GM10248 (cell line): ENCODE measurements at regions of chr6 and their contacts with region 1.

Region 1: GRCh38 chr6:138115877-138116660 is 8.8 kb upstream of the PERP start:
- DNase-seq: peak; percentile 61
- CTCF ChIP-seq: peak; percentile 51

Region 2: DNA sequence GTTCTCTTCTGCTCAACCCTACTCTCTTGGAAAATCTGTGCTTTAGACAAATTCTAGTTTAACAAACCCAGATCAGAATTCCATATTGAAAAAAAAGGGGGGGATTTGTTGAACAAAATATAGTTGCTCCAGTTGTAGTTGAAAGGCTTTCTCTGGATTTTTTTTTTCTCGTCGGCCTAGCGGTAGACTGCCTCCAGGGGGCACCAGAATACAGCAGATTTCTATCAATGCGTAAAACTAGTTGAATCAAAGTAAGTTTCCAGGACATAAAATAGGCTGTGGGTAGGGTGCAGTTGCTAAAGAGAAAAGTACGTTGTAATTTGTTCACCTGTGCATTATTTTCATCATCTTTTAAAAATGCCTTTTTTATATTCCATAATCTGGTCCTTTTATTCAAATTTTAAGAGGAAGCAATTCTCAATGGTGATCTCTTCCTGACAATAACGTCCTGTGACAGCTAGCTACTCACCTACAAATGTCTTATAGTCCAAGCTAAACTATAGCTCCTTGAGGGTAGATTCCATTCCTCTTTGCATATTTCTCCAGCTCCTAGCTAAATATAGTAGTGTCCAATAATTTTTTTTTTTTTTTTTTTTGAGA is 114.2 kb before region 1 on chr6:
- CTCF ChIA-PET with region 1: interaction called, 12 read pairs
- POLR2A ChIA-PET with region 1: no interaction called
- DNase-seq: peak; percentile 40
- CTCF ChIP-seq: peak; percentile 95

Region 3: GRCh38 chr6:138278326-138278725 is 162.3 kb after region 1 on chr6:
- CTCF ChIA-PET with region 1: interaction called, 10 read pairs
- POLR2A ChIA-PET with region 1: no interaction called
- DNase-seq: no peak
- CTCF ChIP-seq: no peak

Region 4: GRCh38 chr6:138428944-138429598 is 313.0 kb after region 1 on chr6:
- CTCF ChIA-PET with region 1: interaction called, 18 read pairs
- POLR2A ChIA-PET with region 1: no interaction called
- DNase-seq: peak; percentile 56
- CTCF ChIP-seq: peak; percentile 37

Region 5: GRCh38 chr6:138517635-138518034 is 401.6 kb after region 1 on chr6:
- CTCF ChIA-PET with region 1: interaction called, 48 read pairs
- POLR2A ChIA-PET with region 1: no interaction called
- DNase-seq: peak; percentile 68
- CTCF ChIP-seq: peak; percentile 60

Region 6: DNA sequence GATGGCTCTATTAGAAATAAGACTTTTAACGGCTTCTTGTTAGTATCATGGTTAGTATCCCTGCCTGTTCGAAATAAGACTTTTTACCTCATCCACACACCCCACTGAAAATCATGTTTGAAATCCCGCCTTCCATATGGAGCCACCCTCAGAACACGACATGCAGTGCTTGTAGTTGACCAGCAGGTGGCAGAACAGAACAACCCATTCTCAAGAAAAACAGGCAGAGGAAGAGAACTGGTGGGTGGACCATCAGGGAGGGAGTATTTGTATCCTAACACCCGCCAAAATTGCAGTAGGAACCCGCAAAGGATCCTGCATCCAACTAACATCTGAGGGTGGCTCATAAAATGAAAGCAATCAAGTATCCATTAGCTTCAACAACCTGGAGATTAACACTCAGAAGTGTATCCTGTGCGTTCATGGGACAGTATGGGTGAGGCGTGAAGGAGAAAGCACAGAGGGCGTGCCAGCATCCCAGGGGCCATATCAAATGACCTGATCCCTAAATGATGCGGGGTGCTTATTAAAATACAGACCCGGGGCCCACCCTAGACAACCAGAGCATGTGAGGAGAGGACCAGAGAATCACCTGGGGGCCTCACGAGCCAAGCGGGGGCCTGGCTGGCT is 472.9 kb after region 1 on chr6:
- CTCF ChIA-PET with region 1: interaction called, 17 read pairs
- POLR2A ChIA-PET with region 1: no interaction called
- DNase-seq: peak; percentile 68
- CTCF ChIP-seq: peak; percentile 96